CD14-positive monocyte (primary cell): ENCODE measurements at regions of chr1 and their contacts with region 1.

Region 1: DNA sequence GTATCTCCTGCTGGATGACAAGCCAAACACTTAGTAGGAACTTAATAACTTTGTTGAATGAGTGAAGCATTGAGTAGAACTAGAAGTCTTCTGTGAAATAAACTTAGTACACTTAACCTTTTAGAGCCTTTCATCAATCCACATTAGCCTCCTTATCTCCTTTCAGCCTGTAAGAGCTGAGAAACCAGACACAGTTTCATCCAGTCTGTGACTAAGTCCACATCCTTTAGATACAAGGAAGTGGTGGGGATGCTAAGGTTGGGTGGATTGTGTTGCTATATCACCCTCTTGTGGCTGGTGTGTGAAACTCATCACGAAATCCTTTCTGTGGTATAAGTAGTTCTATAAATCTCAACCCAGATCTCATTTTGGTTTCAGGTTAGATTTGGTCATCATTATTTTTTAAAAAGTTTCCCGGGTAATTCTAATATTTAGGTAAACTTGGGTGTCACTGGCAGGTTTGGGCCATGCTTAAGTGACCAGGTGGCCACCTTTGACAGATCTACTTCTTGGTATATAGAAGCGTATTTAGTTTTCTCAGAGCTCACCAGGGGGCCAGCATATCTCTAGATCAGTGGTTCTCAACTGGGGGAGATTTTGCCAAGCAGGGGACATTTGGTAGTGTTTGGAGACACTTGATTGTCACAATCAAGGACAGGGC is 27.8 kb upstream of the CD84 start:
- DNase-seq: peak; percentile 79 to 89 (median 88)
- H3K4me3 ChIP-seq: no peak overlapping the region
- H3K4me3 Mint-ChIP-seq: no peak overlapping the region
- H3K27ac ChIP-seq: no peak overlapping the region
- H3K27ac Mint-ChIP-seq: peak overlapping the region in 1 of 7 donors; percentile 55
- H3K4me1 ChIP-seq: no peaks in the 10 kb centered on the region
- H3K4me1 Mint-ChIP-seq: peaks cover 7% of the 10 kb centered on the region
- H3K27me3 ChIP-seq: no peaks in the 10 kb centered on the region
- H3K27me3 Mint-ChIP-seq: no peaks in the 10 kb centered on the region
- CTCF ChIP-seq: peak; percentile 82

Region 2: GRCh38 chr1:160428655-160429054 is 178.5 kb before region 1 on chr1:
- intact Hi-C with region 1: loop called (anchors 1 to 2 kb)
- DNase-seq: peak; percentile 22 to 42 (median 40)
- H3K4me3 ChIP-seq: no peak overlapping the region
- H3K4me3 Mint-ChIP-seq: no peak overlapping the region
- H3K27ac ChIP-seq: no peak overlapping the region
- H3K27ac Mint-ChIP-seq: peak overlapping the region in 3 of 7 donors; percentile 25 to 30 (median 29)
- H3K4me1 ChIP-seq: peaks cover 16 to 24% of the 10 kb centered on the region in 2 donors
- H3K4me1 Mint-ChIP-seq: peaks cover 30% of the 10 kb centered on the region
- H3K27me3 ChIP-seq: no peaks in the 10 kb centered on the region
- H3K27me3 Mint-ChIP-seq: peaks cover 0 to 5% (median 1%) of the 10 kb centered on the region in 3 donors
- CTCF ChIP-seq: peak; percentile 69

Region 3: DNA sequence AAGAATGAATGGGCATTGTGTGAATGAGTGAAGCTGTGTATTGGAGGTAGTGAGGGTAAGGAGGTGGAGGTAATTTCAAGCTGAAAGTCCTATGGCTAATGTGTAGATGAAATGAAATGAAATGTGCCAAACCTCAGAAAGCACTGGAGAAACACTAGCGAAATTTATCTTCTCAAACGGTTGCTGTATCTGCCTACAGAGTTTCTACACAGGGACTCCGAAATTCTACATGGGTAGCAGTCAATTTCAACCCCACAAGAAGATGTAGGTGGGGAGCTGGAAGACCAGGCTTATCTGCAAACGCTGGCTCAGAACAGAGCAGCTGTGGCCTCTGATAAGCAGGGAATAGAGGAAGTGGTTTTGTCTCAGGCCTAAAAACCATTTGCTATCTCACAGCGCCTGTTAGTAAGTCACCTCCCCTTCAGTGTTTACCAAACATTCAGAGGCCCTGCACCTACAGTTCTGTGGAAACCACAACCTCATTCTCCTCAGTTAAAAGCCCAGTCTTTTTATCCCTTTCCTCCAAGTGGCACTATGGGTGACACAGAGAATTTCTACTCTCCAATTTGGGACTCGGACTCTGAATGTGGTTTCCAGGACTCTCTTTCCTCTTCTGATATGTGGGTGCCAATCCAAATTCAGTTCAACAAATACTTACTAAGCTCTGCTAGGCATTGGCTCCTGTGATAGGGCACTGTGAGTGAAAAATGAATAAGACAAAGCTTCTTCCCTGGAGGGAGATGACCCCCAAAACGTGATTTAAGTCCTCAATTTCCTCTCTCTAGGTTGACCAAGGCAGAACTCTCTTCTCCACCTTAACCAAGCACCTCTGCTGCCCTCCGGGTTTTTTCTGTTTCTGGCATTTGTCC is 66.9 kb before region 1 on chr1:
- intact Hi-C with region 1: loop called (anchors 5 kb)
- DNase-seq: peak; percentile 32 to 58 (median 41)
- H3K4me3 ChIP-seq: peak overlapping the region in 1 of 3 experiments; percentile 1
- H3K4me3 Mint-ChIP-seq: peak overlapping the region in 1 of 2 donors; percentile 22
- H3K27ac ChIP-seq: peak overlapping the region in 1 of 2 donors; percentile 53
- H3K27ac Mint-ChIP-seq: peak overlapping the region; percentile 41 to 92 (median 68)
- H3K4me1 ChIP-seq: peaks cover 19 to 22% of the 10 kb centered on the region in 2 donors
- H3K4me1 Mint-ChIP-seq: peaks cover 37% of the 10 kb centered on the region
- H3K27me3 ChIP-seq: no peaks in the 10 kb centered on the region
- H3K27me3 Mint-ChIP-seq: no peaks in the 10 kb centered on the region
- CTCF ChIP-seq: no peak

Region 4: GRCh38 chr1:160558660-160559380 is 48.3 kb before region 1 on chr1:
- intact Hi-C with region 1: no loop called
- DNase-seq: no peak
- H3K4me3 ChIP-seq: no peak overlapping the region
- H3K4me3 Mint-ChIP-seq: peak overlapping the region in 1 of 2 donors; percentile 14
- H3K27ac ChIP-seq: peak overlapping the region in 1 of 2 donors; percentile 42
- H3K27ac Mint-ChIP-seq: peak overlapping the region in 4 of 7 donors; percentile 7 to 82 (median 70)
- H3K4me1 ChIP-seq: peaks cover 16 to 34% of the 10 kb centered on the region in 2 donors
- H3K4me1 Mint-ChIP-seq: peaks cover 46% of the 10 kb centered on the region
- H3K27me3 ChIP-seq: no peaks in the 10 kb centered on the region
- H3K27me3 Mint-ChIP-seq: peaks cover 0 to 2% (median 0%) of the 10 kb centered on the region in 3 donors
- CTCF ChIP-seq: no peak